CD14-positive monocyte (primary cell): ENCODE measurements at regions of chr7 and their contacts with region 1.

Region 1: DNA sequence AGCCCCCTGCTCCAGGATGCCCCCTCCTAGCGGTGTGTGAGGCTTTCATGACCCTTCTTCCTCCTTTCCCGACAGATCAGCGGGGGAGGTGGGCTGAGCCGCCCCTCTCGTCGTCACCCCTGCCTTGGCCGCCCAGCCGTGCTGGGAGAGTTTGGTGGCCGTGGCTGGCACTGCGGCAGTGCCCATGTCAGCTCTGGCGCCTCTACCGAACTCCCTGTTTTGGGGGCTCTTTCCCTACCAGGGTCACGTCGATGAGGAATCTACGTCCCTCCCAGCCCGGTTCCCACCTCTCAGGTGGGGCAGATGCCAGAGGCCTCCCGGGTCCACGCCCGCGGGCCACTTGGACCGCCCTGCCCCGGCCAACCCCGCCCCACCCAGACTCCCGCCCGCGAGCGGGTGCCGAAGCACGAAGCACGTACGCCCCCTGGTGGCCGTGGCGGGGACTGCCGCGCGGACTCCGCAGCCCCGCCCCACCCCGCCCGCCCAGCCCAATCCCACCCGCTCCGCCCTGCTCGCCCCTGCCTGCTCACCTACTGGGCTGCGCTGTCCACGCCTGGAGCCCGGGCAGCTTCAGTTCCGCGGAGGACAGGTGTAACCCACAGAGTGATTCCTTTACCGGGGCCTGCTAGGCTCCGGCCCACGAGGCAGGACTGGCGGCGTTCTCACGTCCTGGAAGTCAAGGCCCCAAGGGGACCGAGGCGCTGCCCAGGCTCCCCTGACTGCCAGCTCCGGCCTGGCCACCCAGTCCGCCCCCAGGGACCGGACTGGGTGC is 127.1 kb downstream of the UBE2H start:
- DNase-seq: peak; percentile 66 to 73 (median 68)
- H3K4me3 ChIP-seq: peak overlapping the region; percentile 35 to 85 (median 74)
- H3K4me3 Mint-ChIP-seq: peak overlapping the region; percentile 85 to 93
- H3K27ac ChIP-seq: no peak overlapping the region
- H3K27ac Mint-ChIP-seq: peak overlapping the region in 3 of 7 donors; percentile 46 to 66 (median 55)
- H3K4me1 ChIP-seq: peaks cover 25 to 30% of the 10 kb centered on the region in 2 donors
- H3K4me1 Mint-ChIP-seq: peaks cover 26% of the 10 kb centered on the region
- H3K27me3 ChIP-seq: peaks cover 0 to 6% of the 10 kb centered on the region in 2 donors
- H3K27me3 Mint-ChIP-seq: peaks cover 12 to 33% (median 13%) of the 10 kb centered on the region in 3 donors
- CTCF ChIP-seq: peak; percentile 93

Region 2: DNA sequence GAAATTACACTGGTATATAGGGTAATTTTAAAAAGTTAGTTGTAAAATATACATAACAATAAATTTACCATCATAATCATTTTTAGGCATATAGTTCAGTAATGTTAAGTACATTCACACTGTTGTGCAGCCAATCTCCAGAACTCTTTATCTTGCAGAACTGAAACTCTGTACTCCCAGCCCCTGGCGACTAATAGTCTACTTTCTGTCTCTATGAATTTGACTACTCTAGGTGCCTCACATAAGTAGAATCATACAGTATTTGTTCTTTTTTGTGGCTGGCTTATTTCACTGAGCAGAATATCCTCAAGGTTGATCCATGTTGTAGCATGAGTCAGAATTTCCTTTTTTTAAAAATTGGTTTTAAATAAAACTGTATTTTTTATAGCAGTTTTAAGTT is 172.8 kb before region 1 on chr7:
- intact Hi-C with region 1: loop called in 1 of 2 experiments (anchors 10 kb)
- DNase-seq: no peak
- H3K4me3 ChIP-seq: no peak overlapping the region
- H3K4me3 Mint-ChIP-seq: no peak overlapping the region
- H3K27ac ChIP-seq: no peak overlapping the region
- H3K27ac Mint-ChIP-seq: no peak overlapping the region
- H3K4me1 ChIP-seq: peaks cover 0 to 7% of the 10 kb centered on the region in 2 donors
- H3K4me1 Mint-ChIP-seq: peaks cover 14% of the 10 kb centered on the region
- H3K27me3 ChIP-seq: no peaks in the 10 kb centered on the region
- H3K27me3 Mint-ChIP-seq: no peaks in the 10 kb centered on the region
- CTCF ChIP-seq: no peak

Region 3: GRCh38 chr7:129664029-129665012 is 161.4 kb before region 1 on chr7:
- intact Hi-C with region 1: loop called (anchors 10 kb)
- DNase-seq: no peak
- H3K4me3 ChIP-seq: no peak overlapping the region
- H3K4me3 Mint-ChIP-seq: no peak overlapping the region
- H3K27ac ChIP-seq: no peak overlapping the region
- H3K27ac Mint-ChIP-seq: peak overlapping the region in 2 of 7 donors; percentile 14 to 41
- H3K4me1 ChIP-seq: no peaks in the 10 kb centered on the region
- H3K4me1 Mint-ChIP-seq: peaks cover 7% of the 10 kb centered on the region
- H3K27me3 ChIP-seq: no peaks in the 10 kb centered on the region
- H3K27me3 Mint-ChIP-seq: peaks cover 0 to 2% (median 0%) of the 10 kb centered on the region in 3 donors
- CTCF ChIP-seq: peak; percentile 32

Region 4: GRCh38 chr7:129780257-129780973 is 45.3 kb before region 1 on chr7:
- intact Hi-C with region 1: loop called in 1 of 2 experiments (anchors 5 kb)
- DNase-seq: peak in 1 of 3 donors; percentile 39
- H3K4me3 ChIP-seq: peak overlapping the region; percentile 3 to 68 (median 24)
- H3K4me3 Mint-ChIP-seq: peak overlapping the region; percentile 59 to 91
- H3K27ac ChIP-seq: no peak overlapping the region
- H3K27ac Mint-ChIP-seq: no peak overlapping the region
- H3K4me1 ChIP-seq: peaks cover 61 to 67% of the 10 kb centered on the region in 2 donors
- H3K4me1 Mint-ChIP-seq: peaks cover 46% of the 10 kb centered on the region
- H3K27me3 ChIP-seq: peaks cover 79 to 95% of the 10 kb centered on the region in 2 donors
- H3K27me3 Mint-ChIP-seq: peaks cover 84 to 98% (median 89%) of the 10 kb centered on the region in 3 donors
- CTCF ChIP-seq: no peak

Region 5: DNA sequence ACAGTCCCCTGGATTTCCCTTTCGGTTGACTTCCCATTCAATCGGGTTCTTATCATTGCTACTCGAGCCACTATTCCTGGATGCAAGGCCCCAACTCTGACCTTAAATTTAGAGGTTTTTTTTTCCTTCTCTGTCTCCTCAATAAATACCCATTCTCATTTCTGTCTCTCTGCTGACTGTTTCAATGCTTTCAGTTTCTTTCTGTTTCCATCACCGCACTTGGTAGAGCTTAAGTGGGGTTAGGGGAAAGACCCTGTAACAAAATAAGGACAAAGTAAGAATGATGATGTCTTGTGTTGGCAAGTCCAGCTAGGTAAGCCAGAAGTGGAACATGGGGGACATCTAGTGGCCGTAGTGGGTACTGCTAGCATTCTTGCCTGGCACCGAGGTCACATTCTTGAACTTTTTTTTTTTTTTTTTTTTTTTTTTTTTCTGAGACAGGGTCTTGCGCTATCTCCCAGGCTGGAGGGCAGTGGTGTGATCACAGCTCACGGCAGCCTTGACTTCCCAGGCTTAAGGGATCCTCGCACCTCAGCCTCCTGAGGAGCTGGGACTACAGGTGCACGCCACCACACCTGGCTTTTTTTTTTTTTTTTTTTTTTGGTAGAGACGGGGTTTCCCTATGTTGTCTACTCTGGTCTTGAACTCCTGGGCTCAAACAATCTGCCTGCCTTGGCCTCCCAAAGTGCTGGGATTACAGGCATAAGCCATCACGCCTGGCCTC is 185.2 kb after region 1 on chr7:
- intact Hi-C with region 1: loop called (anchors 10 kb)
- DNase-seq: peak; percentile 77 to 81 (median 81)
- H3K4me3 ChIP-seq: no peak overlapping the region
- H3K4me3 Mint-ChIP-seq: no peak overlapping the region
- H3K27ac ChIP-seq: no peak overlapping the region
- H3K27ac Mint-ChIP-seq: peak overlapping the region in 3 of 7 donors; percentile 47 to 80 (median 55)
- H3K4me1 ChIP-seq: no peaks in the 10 kb centered on the region
- H3K4me1 Mint-ChIP-seq: peaks cover 10% of the 10 kb centered on the region
- H3K27me3 ChIP-seq: no peaks in the 10 kb centered on the region
- H3K27me3 Mint-ChIP-seq: peaks cover 0 to 5% (median 1%) of the 10 kb centered on the region in 3 donors
- CTCF ChIP-seq: peak; percentile 87

Region 6: GRCh38 chr7:130079846-130080394 is 254.2 kb after region 1 on chr7:
- intact Hi-C with region 1: no loop called
- DNase-seq: no peak
- H3K4me3 ChIP-seq: no peak overlapping the region
- H3K4me3 Mint-ChIP-seq: no peak overlapping the region
- H3K27ac ChIP-seq: peak overlapping the region in 1 of 2 donors; percentile 36
- H3K27ac Mint-ChIP-seq: peak overlapping the region in 1 of 7 donors; percentile 10
- H3K4me1 ChIP-seq: peaks cover 0 to 6% of the 10 kb centered on the region in 2 donors
- H3K4me1 Mint-ChIP-seq: peaks cover 20% of the 10 kb centered on the region
- H3K27me3 ChIP-seq: no peaks in the 10 kb centered on the region
- H3K27me3 Mint-ChIP-seq: peaks cover 0 to 1% (median 0%) of the 10 kb centered on the region in 3 donors
- CTCF ChIP-seq: no peak